Naive thymus-derived CD4-positive, alpha-beta T cell (primary cell): ENCODE measurements at regions of chr20 and their contacts with region 1.

Region 1: GRCh38 chr20:63272584-63273579 is at the start of gene ARFGAP1:
- DNase-seq: peak; percentile 73 to 91 (median 85)
- ATAC-seq: peak; percentile 97
- H3K4me3 ChIP-seq: peak within 1 kb of the TSS; percentile 53
- H3K4me3 Mint-ChIP-seq: peak within 1 kb of the TSS; percentile 83 to 94 (median 90)
- H3K27ac ChIP-seq: peak within 1 kb of the TSS; percentile 81
- H3K27ac Mint-ChIP-seq: peak within 1 kb of the TSS; percentile 52 to 95 (median 89)
- H3K4me1 ChIP-seq: peaks cover 10 to 22% of the 10 kb centered on the region in 2 donors
- H3K4me1 Mint-ChIP-seq: peaks cover 20 to 38% (median 28%) of the 10 kb centered on the region in 7 donors
- H3K27me3 ChIP-seq: no peaks in the 10 kb centered on the region
- H3K27me3 Mint-ChIP-seq: peaks cover 0 to 9% (median 0%) of the 10 kb centered on the region in 5 donors
- total RNA-seq, gene ARFGAP1: 90.6 to 119 (median 107) TPM

Region 2: DNA sequence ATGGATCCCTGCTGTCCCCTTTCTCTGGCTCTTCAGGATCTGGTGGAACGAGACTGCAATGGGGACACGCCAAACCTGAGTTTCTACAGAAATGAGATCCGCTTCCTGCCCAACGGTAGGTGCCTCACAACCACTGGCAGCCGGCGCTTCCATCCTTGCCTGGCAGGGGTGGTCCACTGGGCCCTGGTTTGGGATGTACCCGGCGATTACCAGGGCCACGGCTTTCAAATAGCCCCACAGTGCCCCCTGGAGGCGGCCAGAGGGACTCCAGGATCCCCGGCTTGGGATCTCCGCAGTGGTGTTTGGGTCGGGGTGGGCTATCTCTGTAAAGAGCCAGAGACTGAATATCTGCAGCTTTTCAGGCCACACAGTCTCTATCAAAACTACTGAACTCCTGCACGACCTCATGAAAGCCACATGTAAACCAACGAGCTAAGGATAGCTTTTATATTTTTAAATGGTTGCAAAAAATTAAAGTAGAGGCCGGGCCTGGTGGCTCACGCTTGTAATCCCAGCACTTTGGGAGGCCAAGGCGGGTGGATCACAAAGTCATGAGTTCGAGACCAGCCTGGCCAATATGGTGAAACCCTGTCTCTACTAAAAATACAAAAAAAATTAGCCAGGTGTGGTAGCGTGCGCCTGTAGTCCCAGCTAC is 464.5 kb before region 1 on chr20:
- CTCF ChIA-PET with region 1: no interaction called
- POLR2A ChIA-PET with region 1: no interaction called
- intact Hi-C with region 1: loop called in 1 of 2 experiments (anchors 5 kb)
- DNase-seq: peak; percentile 58 to 84 (median 71)
- ATAC-seq: peak; percentile 70
- H3K4me3 ChIP-seq: no peak overlapping the region
- H3K4me3 Mint-ChIP-seq: peak overlapping the region in 9 of 10 donors; percentile 18 to 82 (median 57)
- H3K27ac ChIP-seq: peak overlapping the region; percentile 22
- H3K27ac Mint-ChIP-seq: peak overlapping the region in 7 of 9 donors; percentile 13 to 88 (median 65)
- H3K4me1 ChIP-seq: peaks cover 16 to 30% of the 10 kb centered on the region in 2 donors
- H3K4me1 Mint-ChIP-seq: peaks cover 16 to 33% (median 25%) of the 10 kb centered on the region in 7 donors
- H3K27me3 ChIP-seq: no peaks in the 10 kb centered on the region
- H3K27me3 Mint-ChIP-seq: no peaks in the 10 kb centered on the region

Region 3: GRCh38 chr20:63216041-63216848 is 56.6 kb before region 1 on chr20 and contains the start of gene YTHDF1:
- CTCF ChIA-PET with region 1: no interaction called
- POLR2A ChIA-PET with region 1: interaction called, 3 read pairs
- intact Hi-C with region 1: loop called (anchors 1 kb)
- DNase-seq: peak; percentile 93 to 98 (median 96)
- ATAC-seq: peak; percentile 97
- H3K4me3 ChIP-seq: peak within 1 kb of the TSS; percentile 78
- H3K4me3 Mint-ChIP-seq: peak within 1 kb of the TSS; percentile 88 to 97 (median 92)
- H3K27ac ChIP-seq: peak within 1 kb of the TSS; percentile 95
- H3K27ac Mint-ChIP-seq: peak within 1 kb of the TSS; percentile 86 to 96 (median 91)
- H3K4me1 ChIP-seq: peaks cover 10 to 39% of the 10 kb centered on the region in 2 donors
- H3K4me1 Mint-ChIP-seq: peaks cover 34 to 49% (median 46%) of the 10 kb centered on the region in 7 donors
- H3K27me3 ChIP-seq: no peaks in the 10 kb centered on the region
- H3K27me3 Mint-ChIP-seq: peaks cover 0 to 6% (median 0%) of the 10 kb centered on the region in 5 donors
- total RNA-seq, gene YTHDF1: 35.9 to 52.1 (median 42.0) TPM

Region 4: GRCh38 chr20:63290677-63291472 is 18.0 kb after region 1 on chr20:
- CTCF ChIA-PET with region 1: no interaction called
- POLR2A ChIA-PET with region 1: interaction called, 3 read pairs
- intact Hi-C with region 1: loop called in 1 of 2 experiments (anchors 2 kb)
- DNase-seq: peak in 8 of 9 donors; percentile 30 to 76 (median 57)
- ATAC-seq: peak; percentile 73
- H3K4me3 ChIP-seq: no peak overlapping the region
- H3K4me3 Mint-ChIP-seq: no peak overlapping the region
- H3K27ac ChIP-seq: no peak overlapping the region
- H3K27ac Mint-ChIP-seq: no peak overlapping the region
- H3K4me1 ChIP-seq: peaks cover 0 to 4% of the 10 kb centered on the region in 2 donors
- H3K4me1 Mint-ChIP-seq: peaks cover 6 to 13% (median 8%) of the 10 kb centered on the region in 7 donors
- H3K27me3 ChIP-seq: no peaks in the 10 kb centered on the region
- H3K27me3 Mint-ChIP-seq: peaks cover 0 to 7% (median 0%) of the 10 kb centered on the region in 5 donors

Region 5: GRCh38 chr20:63627129-63627750 is 354.4 kb after region 1 on chr20:
- CTCF ChIA-PET with region 1: no interaction called
- POLR2A ChIA-PET with region 1: no interaction called
- intact Hi-C with region 1: loop called in 1 of 2 experiments (anchors 2 kb)
- DNase-seq: peak; percentile 74 to 99 (median 97)
- ATAC-seq: peak; percentile 93
- H3K4me3 ChIP-seq: peak overlapping the region; percentile 96
- H3K4me3 Mint-ChIP-seq: peak overlapping the region; percentile 93 to 99 (median 98)
- H3K27ac ChIP-seq: peak overlapping the region; percentile 85
- H3K27ac Mint-ChIP-seq: peak overlapping the region; percentile 79 to 98 (median 95)
- H3K4me1 ChIP-seq: peaks cover 29 to 40% of the 10 kb centered on the region in 2 donors
- H3K4me1 Mint-ChIP-seq: peaks cover 28 to 64% (median 42%) of the 10 kb centered on the region in 7 donors
- H3K27me3 ChIP-seq: no peaks in the 10 kb centered on the region
- H3K27me3 Mint-ChIP-seq: no peaks in the 10 kb centered on the region

Region 6: GRCh38 chr20:63973636-63974402 is 700.9 kb after region 1 on chr20:
- CTCF ChIA-PET with region 1: no interaction called
- POLR2A ChIA-PET with region 1: no interaction called
- intact Hi-C with region 1: loop called in 1 of 2 experiments (anchors 5 kb)
- DNase-seq: peak; percentile 59 to 89 (median 78)
- ATAC-seq: peak; percentile 81
- H3K4me3 ChIP-seq: no peak overlapping the region
- H3K4me3 Mint-ChIP-seq: peak overlapping the region in 5 of 10 donors; percentile 7 to 71 (median 36)
- H3K27ac ChIP-seq: peak overlapping the region; percentile 35
- H3K27ac Mint-ChIP-seq: peak overlapping the region; percentile 16 to 88 (median 71)
- H3K4me1 ChIP-seq: peaks cover 16 to 36% of the 10 kb centered on the region in 2 donors
- H3K4me1 Mint-ChIP-seq: peaks cover 34 to 63% (median 54%) of the 10 kb centered on the region in 7 donors
- H3K27me3 ChIP-seq: no peaks in the 10 kb centered on the region
- H3K27me3 Mint-ChIP-seq: peaks cover 0 to 2% (median 0%) of the 10 kb centered on the region in 5 donors